Colonic mucosa (tissue), 4 donors: ENCODE measurements at regions of chr9 and their contacts with region 1.

Region 1: GRCh38 chr9:33466565-33467495 is 6.9 kb downstream of the NOL6 start:
- DNase-seq: peak; percentile 72
- H3K4me3 ChIP-seq: no peak overlapping the region
- H3K27ac ChIP-seq: no peak overlapping the region
- H3K4me1 ChIP-seq: no peaks in the 10 kb centered on the region
- H3K27me3 ChIP-seq: no peaks in the 10 kb centered on the region
- CTCF ChIP-seq: peak; percentile 97

Region 2: DNA sequence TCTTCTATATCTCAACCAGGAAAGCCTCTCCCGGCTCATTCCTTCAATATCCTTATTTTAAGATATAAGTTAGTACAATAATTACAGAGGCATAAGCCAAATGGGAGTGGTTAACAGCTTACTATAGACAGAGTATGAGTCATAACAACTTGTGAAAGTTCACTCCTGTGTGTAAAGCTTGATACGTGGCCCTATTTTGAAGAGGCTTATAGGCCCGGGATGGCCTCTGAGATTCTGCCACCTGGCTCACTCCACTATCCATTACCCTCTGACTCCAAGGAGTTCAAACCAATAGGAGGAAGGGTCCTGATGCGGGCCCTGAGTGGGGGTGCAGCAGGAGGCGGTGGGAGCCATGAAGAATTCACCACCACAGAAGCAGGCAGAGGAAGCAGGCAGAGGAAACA is 336.3 kb before region 1 on chr9:
- intact Hi-C with region 1: no loop called
- DNase-seq: no peak
- H3K4me3 ChIP-seq: no peak overlapping the region
- H3K27ac ChIP-seq: peak overlapping the region; percentile 64
- H3K4me1 ChIP-seq: peaks cover 26% of the 10 kb centered on the region
- H3K27me3 ChIP-seq: no peaks in the 10 kb centered on the region
- CTCF ChIP-seq: no peak

Region 3: GRCh38 chr9:33287087-33287490 is 179.7 kb before region 1 on chr9:
- intact Hi-C with region 1: loop called (anchors 5 kb)
- DNase-seq: peak; percentile 69
- H3K4me3 ChIP-seq: no peak overlapping the region
- H3K27ac ChIP-seq: no peak overlapping the region
- H3K4me1 ChIP-seq: peaks cover 5% of the 10 kb centered on the region
- H3K27me3 ChIP-seq: no peaks in the 10 kb centered on the region
- CTCF ChIP-seq: peak; percentile 65

Region 4: GRCh38 chr9:33374634-33375213 is 92.1 kb before region 1 on chr9:
- intact Hi-C with region 1: loop called (anchors 5 kb)
- DNase-seq: peak; percentile 85
- H3K4me3 ChIP-seq: no peak overlapping the region
- H3K27ac ChIP-seq: peak overlapping the region; percentile 27
- H3K4me1 ChIP-seq: no peaks in the 10 kb centered on the region
- H3K27me3 ChIP-seq: no peaks in the 10 kb centered on the region
- CTCF ChIP-seq: peak; percentile 80

Region 5: GRCh38 chr9:33404788-33405362 is 62.0 kb before region 1 on chr9:
- intact Hi-C with region 1: loop called (anchors 5 kb)
- DNase-seq: no peak
- H3K4me3 ChIP-seq: no peak overlapping the region
- H3K27ac ChIP-seq: no peak overlapping the region
- H3K4me1 ChIP-seq: no peaks in the 10 kb centered on the region
- H3K27me3 ChIP-seq: no peaks in the 10 kb centered on the region
- CTCF ChIP-seq: no peak

Region 6: DNA sequence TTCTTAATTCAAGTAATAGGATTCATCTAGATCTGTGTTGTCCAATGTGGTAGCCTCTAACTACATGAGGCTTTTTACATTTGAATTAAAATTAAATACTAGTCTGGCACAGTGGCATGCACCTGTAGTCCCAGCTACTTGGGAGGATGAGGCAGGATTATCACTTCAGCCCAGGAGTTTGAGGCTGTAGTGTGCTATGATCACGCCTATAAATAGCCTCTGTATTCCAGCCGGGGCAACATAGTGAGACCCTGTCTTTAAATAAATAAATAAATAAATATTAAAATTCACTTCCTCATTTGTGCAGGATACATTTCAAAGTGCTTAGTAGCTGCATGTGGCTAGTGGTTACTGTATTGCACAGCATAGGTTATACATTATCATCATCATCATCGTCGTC is 441.9 kb after region 1 on chr9:
- intact Hi-C with region 1: no loop called
- DNase-seq: no peak
- H3K4me3 ChIP-seq: no peak overlapping the region
- H3K27ac ChIP-seq: no peak overlapping the region
- H3K4me1 ChIP-seq: no peaks in the 10 kb centered on the region
- H3K27me3 ChIP-seq: no peaks in the 10 kb centered on the region
- CTCF ChIP-seq: no peak